ENCODE measurements at regions of chr4 and their contacts with region 1.

Region 1: GRCh38 chr4:26076000-26076587 is 162.1 kb downstream of the SMIM20 start:
- H3K4me3 Mint-ChIP-seq: no peak overlapping the region
- H3K27ac Mint-ChIP-seq: peak overlapping the region; percentile 97
- H3K4me1 Mint-ChIP-seq: peaks cover 83% of the 10 kb centered on the region
- H3K27me3 Mint-ChIP-seq: no peaks in the 10 kb centered on the region

Region 2: DNA sequence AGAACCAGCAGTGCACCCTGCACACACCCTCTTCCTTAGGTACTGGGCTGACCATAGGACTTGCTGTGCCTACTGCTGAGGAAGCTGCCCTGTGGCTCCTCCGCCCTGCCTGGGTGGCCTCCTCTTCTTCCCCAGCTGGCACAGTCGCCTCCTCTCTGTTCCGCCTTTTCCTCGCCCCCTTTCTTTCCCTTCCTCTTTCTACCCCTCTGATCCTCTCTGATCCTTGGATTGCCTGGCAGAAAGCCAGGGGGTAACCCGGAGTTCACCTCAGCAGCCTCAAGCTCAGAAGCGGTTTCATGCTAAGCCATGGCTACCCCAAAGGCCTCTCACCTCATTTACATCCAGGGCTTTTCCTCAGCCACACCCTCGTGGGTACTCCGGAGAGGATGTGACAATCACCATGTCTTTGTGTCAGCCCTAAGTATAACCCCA is 25.9 kb before region 1 on chr4:
- intact Hi-C with region 1: loop called (anchors 2 kb)
- H3K4me3 Mint-ChIP-seq: peak overlapping the region; percentile 4
- H3K27ac Mint-ChIP-seq: peak overlapping the region; percentile 44
- H3K4me1 Mint-ChIP-seq: peaks cover 81% of the 10 kb centered on the region
- H3K27me3 Mint-ChIP-seq: peaks cover 2% of the 10 kb centered on the region

Region 3: GRCh38 chr4:26141911-26142638 is 66.0 kb after region 1 on chr4:
- intact Hi-C with region 1: loop called (anchors 5 kb)
- H3K4me3 Mint-ChIP-seq: peak overlapping the region; percentile 58
- H3K27ac Mint-ChIP-seq: peak overlapping the region; percentile 99
- H3K4me1 Mint-ChIP-seq: peaks cover 90% of the 10 kb centered on the region
- H3K27me3 Mint-ChIP-seq: peaks cover 2% of the 10 kb centered on the region

Region 4: DNA sequence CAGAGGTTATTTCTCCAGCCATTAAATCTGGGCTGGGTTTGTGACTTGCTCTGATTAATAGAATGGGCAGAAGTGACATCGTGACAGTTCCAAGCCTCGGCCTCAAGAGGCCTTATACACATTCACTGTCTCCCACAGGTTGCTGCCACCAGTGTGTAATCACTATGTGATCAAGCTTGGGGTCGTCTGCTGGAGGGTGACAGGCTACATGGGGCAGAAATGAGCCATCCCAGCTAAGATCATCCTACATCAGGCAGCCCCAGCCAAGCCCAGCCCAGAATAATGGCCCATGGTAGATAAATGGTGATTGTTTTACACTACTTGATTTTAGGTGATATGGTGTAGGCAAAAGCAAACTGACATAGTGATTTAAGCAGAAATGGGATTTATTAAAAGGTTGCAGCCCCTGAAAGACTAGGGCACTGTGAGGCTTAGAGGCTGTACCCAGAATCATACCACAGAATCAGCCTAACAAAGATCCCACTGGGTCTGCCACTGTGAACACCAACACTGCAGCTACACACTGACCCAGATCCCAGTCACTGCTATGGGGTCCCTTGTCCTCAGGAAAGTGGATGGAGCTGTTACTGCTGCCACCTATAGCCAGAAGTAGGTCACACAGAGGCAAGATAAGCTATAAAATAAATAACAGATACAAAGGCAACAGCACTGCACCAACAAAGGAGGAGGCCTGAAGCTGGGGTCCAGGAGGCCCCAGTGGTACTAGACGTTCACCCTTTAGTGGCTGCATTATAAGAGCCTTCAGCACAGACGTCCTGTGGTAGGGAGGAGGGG is 85.1 kb after region 1 on chr4:
- intact Hi-C with region 1: loop called (anchors 5 kb)
- H3K4me3 Mint-ChIP-seq: no peak overlapping the region
- H3K27ac Mint-ChIP-seq: peak overlapping the region; percentile 83
- H3K4me1 Mint-ChIP-seq: peaks cover 62% of the 10 kb centered on the region
- H3K27me3 Mint-ChIP-seq: no peaks in the 10 kb centered on the region

Region 5: GRCh38 chr4:26217961-26218676 is 142.0 kb after region 1 on chr4:
- intact Hi-C with region 1: loop called (anchors 2 kb)
- H3K4me3 Mint-ChIP-seq: peak overlapping the region; percentile 58
- H3K27ac Mint-ChIP-seq: peak overlapping the region; percentile 95
- H3K4me1 Mint-ChIP-seq: peaks cover 79% of the 10 kb centered on the region
- H3K27me3 Mint-ChIP-seq: peaks cover 2% of the 10 kb centered on the region

Region 6: DNA sequence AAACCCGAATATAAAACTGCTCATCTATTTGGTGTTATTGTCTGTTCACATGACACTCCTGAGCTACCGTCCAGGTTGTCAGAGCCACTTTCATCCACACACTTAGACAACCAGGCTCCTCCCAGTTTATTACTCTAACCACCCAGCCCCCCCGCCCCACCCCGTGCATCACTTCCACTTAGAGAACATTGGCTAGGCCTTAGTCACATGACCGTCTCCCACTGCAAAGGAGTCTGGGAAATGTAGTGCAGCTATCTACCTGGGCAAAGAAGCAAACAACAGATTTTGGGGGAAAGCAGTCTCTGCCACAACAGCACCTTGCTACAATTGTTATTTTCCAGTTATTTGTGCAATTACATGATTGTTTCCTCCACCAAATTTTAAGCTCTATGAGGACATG is 187.1 kb after region 1 on chr4:
- intact Hi-C with region 1: loop called (anchors 5 kb)
- H3K4me3 Mint-ChIP-seq: no peak overlapping the region
- H3K27ac Mint-ChIP-seq: peak overlapping the region; percentile 57
- H3K4me1 Mint-ChIP-seq: peaks cover 69% of the 10 kb centered on the region
- H3K27me3 Mint-ChIP-seq: no peaks in the 10 kb centered on the region

Region 7: GRCh38 chr4:26308568-26308967 is 232.5 kb after region 1 on chr4:
- intact Hi-C with region 1: no loop called
- H3K4me3 Mint-ChIP-seq: no peak overlapping the region
- H3K27ac Mint-ChIP-seq: no peak overlapping the region
- H3K4me1 Mint-ChIP-seq: peaks cover 13% of the 10 kb centered on the region
- H3K27me3 Mint-ChIP-seq: no peaks in the 10 kb centered on the region

Measured in dendritic cell treated with granulocyte-macrophage colony-stimulating factor and Interleukin-4, amounts not matched to agents 40 ng/mL and 50 ng/mL, for 4 days (primary cell).